Adrenal gland (tissue), 19 donors: ENCODE measurements at regions of chr4 and their contacts with region 1.

Region 1: GRCh38 chr4:182478475-182478874 is 235.3 kb downstream of the TENM3 start:
- DNase-seq: no peak
- H3K4me3 ChIP-seq: no peak overlapping the region
- H3K27ac ChIP-seq: no peak overlapping the region
- H3K4me1 ChIP-seq: no peaks in the 10 kb centered on the region
- H3K27me3 ChIP-seq: no peaks in the 10 kb centered on the region
- CTCF ChIP-seq: peak; percentile 31 to 68 (median 50)
- POLR2A ChIP-seq: no peak

Region 2: GRCh38 chr4:182806259-182807252 is 328.1 kb after region 1 on chr4:
- intact Hi-C with region 1: loop called in 1 of 2 experiments (anchors 2 kb)
- DNase-seq: peak; percentile 63 to 85 (median 76)
- H3K4me3 ChIP-seq: peak overlapping the region in 3 of 4 donors; percentile 9 to 53 (median 36)
- H3K27ac ChIP-seq: peak overlapping the region in 2 of 5 donors; percentile 5 to 21
- H3K4me1 ChIP-seq: peaks cover 0 to 3% of the 10 kb centered on the region in 2 donors
- H3K27me3 ChIP-seq: no peaks in the 10 kb centered on the region
- CTCF ChIP-seq: peak; percentile 71 to 89 (median 83)
- POLR2A ChIP-seq: no peak